ENCODE measurements at regions of chr6 and their contacts with region 1.

Region 1: GRCh38 chr6:130885392-130886192 is 58.4 kb downstream of the SMLR1 start:
- DNase-seq: peak in 4 of 5 donors; percentile 47 to 71 (median 61)
- ATAC-seq: peak; percentile 64 to 89 (median 87)
- H3K4me3 ChIP-seq: no peak overlapping the region
- H3K27ac ChIP-seq: no peak overlapping the region
- H3K4me1 ChIP-seq: peaks cover 0 to 5% (median 0%) of the 10 kb centered on the region in 12 donors
- H3K27me3 ChIP-seq: no peaks in the 10 kb centered on the region
- CTCF ChIP-seq: peak; percentile 83 to 98 (median 90)
- POLR2A ChIP-seq: no peak

Region 2: DNA sequence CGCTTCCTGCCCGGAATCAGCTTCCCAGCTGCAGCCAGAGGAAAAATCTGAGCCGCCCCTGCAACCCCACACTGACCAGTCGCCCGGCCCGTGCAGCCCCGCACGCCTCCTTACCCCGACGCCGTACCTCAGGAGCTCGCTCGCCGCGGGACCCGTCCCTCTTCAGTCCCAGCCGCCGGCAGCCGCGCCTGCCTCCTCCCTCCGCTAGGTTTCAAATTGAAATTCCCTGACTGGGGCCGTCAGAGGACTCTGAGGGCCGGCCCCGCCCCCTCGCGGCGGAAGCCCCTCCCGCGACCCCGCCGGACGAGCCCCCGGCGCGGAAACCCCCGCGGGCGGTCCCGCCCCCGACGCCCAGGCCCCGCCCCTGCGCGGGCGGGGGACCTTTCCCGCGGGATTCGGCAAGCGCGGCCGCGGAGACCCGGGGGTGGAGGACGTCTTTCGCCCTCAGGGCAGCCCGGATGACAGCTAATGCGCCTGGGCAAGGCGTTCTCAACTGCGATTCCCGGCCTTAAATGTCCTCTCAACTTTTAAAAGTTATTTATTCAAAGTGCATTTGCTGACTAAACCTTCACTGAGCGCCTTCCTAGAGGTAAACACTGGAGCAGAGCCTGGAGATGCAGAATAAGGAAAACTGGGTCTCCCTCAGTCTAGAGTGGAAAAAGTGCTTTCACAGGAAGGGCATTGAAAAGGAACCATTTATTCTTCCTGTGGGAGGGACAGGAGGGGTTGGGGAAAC is 177.6 kb after region 1 on chr6 and contains the start of gene EPB41L2:
- intact Hi-C with region 1: loop called in 5 of 10 experiments (anchors 2 to 5 kb)
- DNase-seq: peak; percentile 89 to 93 (median 89)
- ATAC-seq: peak; percentile 71 to 98 (median 94)
- H3K4me3 ChIP-seq: peak within 1 kb of the TSS; percentile 57 to 99 (median 90)
- H3K27ac ChIP-seq: peak within 1 kb of the TSS; percentile 37 to 94 (median 86)
- H3K4me1 ChIP-seq: peaks cover 0 to 31% (median 11%) of the 10 kb centered on the region in 12 donors
- H3K27me3 ChIP-seq: no peaks in the 10 kb centered on the region
- CTCF ChIP-seq: peak in 9 of 12 donors; percentile 13 to 50 (median 33)
- POLR2A ChIP-seq: peak; percentile 14 to 94
- total RNA-seq, gene EPB41L2: 41.0 to 115 (median 53.7) TPM

Region 3: DNA sequence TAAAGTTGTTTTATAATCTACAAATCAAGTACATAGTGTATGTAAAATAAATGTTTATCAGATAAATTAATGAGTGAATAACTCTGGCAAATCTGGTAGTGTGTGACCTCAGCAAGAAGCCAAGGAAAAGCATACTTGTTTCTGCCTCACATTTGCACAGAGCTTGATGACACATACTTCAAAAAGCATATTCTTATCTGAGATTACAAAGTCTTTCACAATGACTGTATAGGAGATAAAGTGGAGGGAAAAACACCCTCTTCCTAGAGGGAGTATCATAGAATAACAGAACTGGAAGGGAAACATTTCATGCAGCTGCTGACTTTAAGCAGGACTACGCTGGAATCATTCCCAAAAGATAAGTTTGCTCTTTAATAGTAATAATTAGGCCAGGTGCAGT is 221.6 kb after region 1 on chr6:
- intact Hi-C with region 1: loop called in 1 of 10 experiments (anchors 2 kb)
- DNase-seq: no peak
- ATAC-seq: peak in 3 of 4 donors; percentile 36 to 65 (median 65)
- H3K4me3 ChIP-seq: no peak overlapping the region
- H3K27ac ChIP-seq: no peak overlapping the region
- H3K4me1 ChIP-seq: no peaks in the 10 kb centered on the region
- H3K27me3 ChIP-seq: no peaks in the 10 kb centered on the region
- CTCF ChIP-seq: no peak
- POLR2A ChIP-seq: no peak

Region 4: DNA sequence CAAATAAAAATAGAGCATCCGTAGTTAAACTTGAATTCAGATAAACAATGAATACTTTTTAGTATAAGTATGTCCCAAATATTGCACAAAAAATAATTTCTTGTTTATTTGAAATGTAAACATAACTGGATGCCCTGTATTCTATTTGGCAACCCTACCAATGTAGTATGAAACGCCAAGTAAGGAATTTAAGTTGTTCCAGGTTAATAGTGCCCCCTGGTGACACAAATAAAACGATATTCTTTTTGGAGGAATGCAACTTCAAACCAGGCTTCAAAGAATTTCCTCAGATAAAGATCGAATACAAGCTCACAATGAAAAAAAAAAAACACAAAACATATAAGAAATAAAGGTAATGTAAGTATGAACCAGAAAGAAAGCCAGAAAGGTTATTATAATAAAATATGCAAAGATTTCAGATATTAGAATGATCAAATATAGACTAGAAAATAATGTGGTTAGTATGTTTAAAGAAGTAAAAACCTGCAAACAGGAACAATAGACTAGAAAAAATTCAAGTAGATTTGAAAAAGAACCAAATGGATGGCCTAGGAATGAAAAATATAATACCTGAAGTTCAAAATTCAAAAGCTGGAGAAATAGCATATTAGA is 231.3 kb after region 1 on chr6:
- intact Hi-C with region 1: loop called (anchors 1 to 5 kb)
- DNase-seq: no peak
- ATAC-seq: peak in 2 of 4 donors; percentile 39 to 42
- H3K4me3 ChIP-seq: no peak overlapping the region
- H3K27ac ChIP-seq: no peak overlapping the region
- H3K4me1 ChIP-seq: peaks cover 0 to 10% (median 0%) of the 10 kb centered on the region in 12 donors
- H3K27me3 ChIP-seq: no peaks in the 10 kb centered on the region
- CTCF ChIP-seq: peak; percentile 37 to 71 (median 49)
- POLR2A ChIP-seq: no peak

Region 5: DNA sequence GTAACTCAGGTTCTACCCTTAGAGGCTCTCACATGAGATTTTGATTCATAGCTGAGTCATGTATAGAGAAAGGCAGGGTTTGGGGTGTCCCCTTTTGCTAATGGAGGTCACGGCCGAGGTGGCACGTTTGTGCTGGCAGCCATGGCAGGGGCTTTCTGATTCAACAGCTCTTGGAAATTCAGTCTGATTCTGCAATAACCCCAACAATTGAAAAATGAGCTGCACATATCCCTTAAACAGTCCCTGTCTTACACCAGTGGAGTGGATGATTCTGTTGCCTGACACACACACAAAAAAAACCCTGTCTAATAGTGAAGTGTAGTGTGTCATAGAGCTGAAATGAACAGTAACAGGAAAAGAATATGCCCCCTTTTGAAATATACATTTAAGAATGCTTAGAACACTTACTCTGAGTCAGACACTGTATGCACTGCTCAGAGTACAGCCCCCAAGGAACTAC is 647.0 kb after region 1 on chr6:
- intact Hi-C with region 1: loop called in 9 of 10 experiments (anchors 2 to 10 kb)
- DNase-seq: no peak
- ATAC-seq: no peak
- H3K4me3 ChIP-seq: no peak overlapping the region
- H3K27ac ChIP-seq: no peak overlapping the region
- H3K4me1 ChIP-seq: no peaks in the 10 kb centered on the region
- H3K27me3 ChIP-seq: no peaks in the 10 kb centered on the region
- CTCF ChIP-seq: no peak
- POLR2A ChIP-seq: no peak

Region 6: DNA sequence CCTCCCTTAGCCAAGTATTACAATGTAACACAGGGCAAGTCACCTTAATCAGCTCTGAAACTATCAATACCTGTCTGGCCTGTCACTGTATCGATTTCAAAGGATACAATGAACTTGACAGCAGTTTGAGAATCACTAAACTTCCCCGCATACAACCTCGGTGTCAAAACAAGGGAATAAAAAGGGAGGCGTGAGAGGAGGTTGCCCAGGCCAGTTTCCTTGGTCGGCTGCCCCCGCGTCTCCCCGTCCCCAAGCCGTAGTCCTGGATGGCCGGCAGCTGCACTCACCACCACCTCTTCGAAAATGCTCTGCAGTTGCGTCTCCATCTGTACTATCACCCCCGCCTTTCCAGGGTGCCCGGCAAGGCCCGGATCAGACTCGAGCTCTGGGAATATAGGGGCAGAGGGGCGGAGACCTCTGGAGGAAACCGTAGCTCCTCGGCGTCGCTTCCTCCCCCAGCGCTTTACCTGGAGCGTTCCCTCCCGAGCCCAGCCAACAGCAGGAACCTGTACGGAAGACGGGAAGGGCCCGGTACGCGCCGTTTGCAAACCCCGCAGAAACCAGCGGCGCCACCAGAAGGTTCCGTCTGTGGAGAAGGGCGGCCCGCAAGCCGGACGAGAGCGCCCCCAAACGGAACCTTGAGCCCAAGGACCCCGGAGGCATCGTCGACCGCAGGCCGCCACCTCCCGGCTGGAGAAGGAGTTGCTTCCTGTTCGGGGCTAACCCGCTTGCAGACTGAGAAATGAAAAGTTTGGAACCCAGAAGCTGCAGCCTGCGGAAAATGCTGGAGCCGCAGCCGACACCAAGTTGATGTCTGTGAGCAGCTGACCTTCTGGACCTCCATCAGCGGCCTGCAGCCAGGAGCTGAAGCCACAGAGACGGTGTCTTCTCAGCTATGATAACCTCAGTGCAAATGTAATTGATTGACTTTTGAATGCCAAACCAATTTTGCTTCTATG is 742.4 kb after region 1 on chr6 and contains the start of gene MED23:
- intact Hi-C with region 1: loop called in 3 of 10 experiments (anchors 5 to 10 kb)
- DNase-seq: peak; percentile 93 to 96 (median 95)
- ATAC-seq: peak; percentile 94 to 99 (median 98)
- H3K4me3 ChIP-seq: peak within 1 kb of the TSS; percentile 35 to 88 (median 82)
- H3K27ac ChIP-seq: peak within 1 kb of the TSS in 11 of 12 donors; percentile 41 to 83 (median 72)
- H3K4me1 ChIP-seq: peaks cover 0 to 24% (median 15%) of the 10 kb centered on the region in 12 donors
- H3K27me3 ChIP-seq: no peaks in the 10 kb centered on the region
- CTCF ChIP-seq: peak; percentile 84 to 100 (median 96)
- POLR2A ChIP-seq: peak in 1 of 2 donors; percentile 62
- total RNA-seq, gene MED23: 9.6 to 15.3 (median 11.4) TPM

Region 7: GRCh38 chr6:131909408-131910218 is 1024.0 kb after region 1 on chr6:
- intact Hi-C with region 1: loop called in 2 of 10 experiments (anchors 10 kb)
- DNase-seq: peak in 4 of 5 donors; percentile 49 to 58 (median 58)
- ATAC-seq: peak in 1 of 4 donors; percentile 78
- H3K4me3 ChIP-seq: no peak overlapping the region
- H3K27ac ChIP-seq: no peak overlapping the region
- H3K4me1 ChIP-seq: no peaks in the 10 kb centered on the region
- H3K27me3 ChIP-seq: peaks cover 0 to 16% (median 0%) of the 10 kb centered on the region in 9 donors
- CTCF ChIP-seq: peak; percentile 76 to 92 (median 87)
- POLR2A ChIP-seq: no peak

Measured in heart left ventricle (tissue), 16 donors.